GM12878 (cell line): ENCODE measurements at regions of chr2 and their contacts with region 1.

Region 1: GRCh38 chr2:203897544-203897943 is 30.0 kb downstream of the CTLA4 start:
- DNase-seq: no peak
- ATAC-seq: no peak
- H3K4me3 ChIP-seq: no peak overlapping the region
- H3K27ac ChIP-seq: no peak overlapping the region
- H3K4me1 ChIP-seq: no peaks in the 10 kb centered on the region
- H3K27me3 ChIP-seq: no peaks in the 10 kb centered on the region; a peak in 1 of 4 replicates
- CTCF ChIP-seq: no peak
- EP300 ChIP-seq: no peak
- POLR2A ChIP-seq: no peak
- RAD21 ChIP-seq: no peak

Region 2: DNA sequence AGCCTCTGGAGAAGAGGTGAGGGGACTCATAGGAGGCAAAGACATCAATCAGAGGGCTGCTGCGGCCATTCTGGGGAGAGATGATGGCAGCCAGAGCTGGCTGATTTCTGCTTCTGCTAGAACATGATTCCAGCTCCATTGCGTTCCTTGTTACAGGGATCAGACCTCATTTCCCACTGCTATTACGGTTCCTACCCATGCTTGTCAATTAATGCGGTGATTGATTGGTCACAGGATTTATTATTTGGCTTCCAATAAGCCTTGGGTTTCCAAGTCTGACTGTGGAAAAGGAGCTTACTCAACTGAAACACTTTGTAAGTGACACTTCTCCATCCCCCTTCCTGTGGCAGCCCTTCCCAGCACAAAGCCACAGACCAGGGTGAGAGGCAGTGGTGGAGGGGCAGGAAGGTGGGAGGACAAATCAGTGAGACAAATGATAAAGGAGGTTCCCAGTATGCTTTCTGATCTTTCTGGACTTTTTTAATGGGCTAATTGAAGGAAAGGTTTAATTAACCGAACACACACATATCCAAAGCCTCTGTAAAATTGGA is 56.8 kb before region 1 on chr2:
- CTCF ChIA-PET with region 1: no interaction called
- POLR2A ChIA-PET with region 1: no interaction called
- RAD21 ChIA-PET with region 1: no interaction called
- SMC1A ChIA-PET with region 1: no interaction called
- in situ Hi-C with region 1: no loop called
- intact Hi-C with region 1: loop called (anchors 5 kb)
- DNase-seq: no peak
- ATAC-seq: no peak
- H3K4me3 ChIP-seq: no peak overlapping the region
- H3K27ac ChIP-seq: no peak overlapping the region
- H3K4me1 ChIP-seq: no peaks in the 10 kb centered on the region
- H3K27me3 ChIP-seq: peaks cover 0 to 3% of the 10 kb centered on the region in 2 experiments; a peak in 1 of 4 replicates
- CTCF ChIP-seq: no peak
- EP300 ChIP-seq: no peak
- POLR2A ChIP-seq: no peak
- RAD21 ChIP-seq: no peak